AG04449 (cell line): ENCODE measurements at regions of chr15 and their contacts with region 1.

Region 1: DNA sequence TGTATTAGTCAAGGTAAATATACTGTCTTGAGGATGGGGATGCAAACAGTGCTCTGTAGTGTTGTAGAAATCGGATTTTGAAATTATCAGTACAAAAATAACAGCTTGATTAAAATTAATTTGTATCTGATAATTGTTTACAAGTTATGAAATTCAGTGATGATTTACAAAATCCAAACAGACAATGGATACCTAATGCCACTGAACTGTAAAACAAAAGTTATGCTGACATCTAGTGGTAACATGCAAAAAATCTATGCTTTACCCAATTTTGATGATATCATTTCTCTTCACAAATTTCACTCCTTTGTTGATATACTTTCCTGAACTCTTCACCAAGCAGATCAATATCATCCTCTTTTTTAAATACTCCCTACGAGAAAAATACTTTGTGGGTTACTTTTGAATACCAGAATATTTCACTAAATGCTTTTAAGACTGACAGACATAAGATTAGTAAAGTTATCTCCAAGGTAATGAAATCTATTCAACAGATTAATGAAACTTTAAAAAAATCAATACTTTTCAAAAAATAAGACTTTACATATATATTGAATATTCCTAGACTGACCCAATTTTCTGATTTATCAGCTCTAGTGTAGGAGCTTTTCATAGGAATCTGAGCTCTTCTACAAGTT is 36.0 kb downstream of the MNS1 start:
- DNase-seq: no peak
- H3K4me3 ChIP-seq: no peak overlapping the region
- CTCF ChIP-seq: peak; percentile 42

Region 2: DNA sequence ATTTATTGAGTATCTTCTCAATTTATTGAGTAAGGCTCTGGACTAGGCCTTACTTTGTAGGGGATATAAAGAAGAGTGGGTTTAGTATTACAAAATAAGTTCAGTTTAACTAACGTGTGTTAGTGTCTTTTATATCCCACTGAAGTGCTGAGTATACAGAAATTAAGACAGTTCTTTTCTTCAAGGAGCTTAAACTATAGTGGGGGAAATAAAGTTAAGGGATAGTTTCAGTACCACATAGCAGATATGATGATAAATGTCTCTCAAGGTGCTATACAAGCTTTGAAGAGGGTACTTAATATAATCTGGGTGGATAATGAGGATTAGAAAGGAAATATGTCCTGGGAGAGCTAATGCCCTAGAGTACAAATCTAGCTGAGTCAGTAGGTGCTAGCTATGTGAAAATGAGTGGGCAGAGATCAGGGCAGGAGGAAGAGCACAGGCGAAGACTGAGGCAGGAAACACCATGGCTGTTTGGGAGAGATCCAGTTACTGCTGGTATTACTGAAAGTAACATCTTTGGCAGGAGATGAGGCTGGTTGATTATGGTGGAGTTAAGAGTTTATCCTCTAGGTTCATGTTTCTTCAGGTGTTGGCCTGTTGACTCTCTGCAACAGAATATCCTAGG is 17.7 kb before region 1 on chr15:
- CTCF ChIA-PET with region 1: interaction called, 17 read pairs
- POLR2A ChIA-PET with region 1: no interaction called
- DNase-seq: no peak
- H3K4me3 ChIP-seq: no peak overlapping the region
- CTCF ChIP-seq: no peak